MCF 10A (cell line): ENCODE measurements at regions of chr17 and their contacts with region 1.

Region 1: DNA sequence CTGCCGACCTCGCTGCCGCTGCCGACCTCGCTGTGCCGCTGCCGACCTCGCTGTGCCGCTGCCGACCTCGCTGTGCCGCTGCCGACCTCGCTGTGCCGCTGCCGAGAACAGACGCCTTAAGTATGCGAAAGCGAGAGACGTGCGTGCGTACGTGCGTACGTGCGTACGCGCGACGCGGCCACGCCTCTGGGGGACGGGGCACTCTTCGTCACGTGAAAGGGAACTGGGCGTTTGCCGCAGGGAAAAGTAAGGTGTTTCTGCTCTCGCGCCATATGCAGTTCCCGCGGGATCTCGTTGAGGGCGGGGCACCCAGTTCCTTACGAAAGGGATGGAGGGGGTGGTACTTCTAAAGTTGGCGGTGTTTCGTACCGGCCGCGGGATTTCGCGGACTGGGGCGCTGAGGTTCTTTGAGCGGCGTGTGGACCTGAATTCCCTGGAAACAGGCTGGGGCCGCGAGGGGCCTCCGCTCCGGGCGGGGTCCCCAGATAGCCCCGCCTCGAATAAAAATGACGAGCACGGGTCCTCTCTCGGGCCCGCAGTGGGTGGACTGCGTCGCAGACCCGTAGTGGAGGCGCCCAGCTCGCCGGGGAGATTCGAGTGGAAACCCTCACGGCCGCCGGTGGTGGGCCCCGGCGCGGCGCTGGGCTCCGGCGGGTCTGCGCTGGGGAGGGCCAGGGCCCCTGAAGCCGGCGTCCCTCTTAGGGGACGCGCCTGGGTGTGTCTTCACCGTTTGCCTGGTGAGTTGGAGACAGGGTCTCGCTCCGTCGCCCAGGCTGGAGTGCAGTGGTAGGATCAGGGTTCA is at the start of gene EIF4A3:
- DNase-seq: peak; percentile 99
- H3K4me3 Mint-ChIP-seq: peak within 1 kb of the TSS; percentile 84
- H3K27ac Mint-ChIP-seq: peak within 1 kb of the TSS; percentile 62
- H3K4me1 Mint-ChIP-seq: peaks cover 17% of the 10 kb centered on the region
- H3K27me3 Mint-ChIP-seq: no peaks in the 10 kb centered on the region
- CTCF ChIP-seq: no peak
- total RNA-seq, gene EIF4A3: 87.0 and 97.7 TPM in 2 replicates

Region 2: DNA sequence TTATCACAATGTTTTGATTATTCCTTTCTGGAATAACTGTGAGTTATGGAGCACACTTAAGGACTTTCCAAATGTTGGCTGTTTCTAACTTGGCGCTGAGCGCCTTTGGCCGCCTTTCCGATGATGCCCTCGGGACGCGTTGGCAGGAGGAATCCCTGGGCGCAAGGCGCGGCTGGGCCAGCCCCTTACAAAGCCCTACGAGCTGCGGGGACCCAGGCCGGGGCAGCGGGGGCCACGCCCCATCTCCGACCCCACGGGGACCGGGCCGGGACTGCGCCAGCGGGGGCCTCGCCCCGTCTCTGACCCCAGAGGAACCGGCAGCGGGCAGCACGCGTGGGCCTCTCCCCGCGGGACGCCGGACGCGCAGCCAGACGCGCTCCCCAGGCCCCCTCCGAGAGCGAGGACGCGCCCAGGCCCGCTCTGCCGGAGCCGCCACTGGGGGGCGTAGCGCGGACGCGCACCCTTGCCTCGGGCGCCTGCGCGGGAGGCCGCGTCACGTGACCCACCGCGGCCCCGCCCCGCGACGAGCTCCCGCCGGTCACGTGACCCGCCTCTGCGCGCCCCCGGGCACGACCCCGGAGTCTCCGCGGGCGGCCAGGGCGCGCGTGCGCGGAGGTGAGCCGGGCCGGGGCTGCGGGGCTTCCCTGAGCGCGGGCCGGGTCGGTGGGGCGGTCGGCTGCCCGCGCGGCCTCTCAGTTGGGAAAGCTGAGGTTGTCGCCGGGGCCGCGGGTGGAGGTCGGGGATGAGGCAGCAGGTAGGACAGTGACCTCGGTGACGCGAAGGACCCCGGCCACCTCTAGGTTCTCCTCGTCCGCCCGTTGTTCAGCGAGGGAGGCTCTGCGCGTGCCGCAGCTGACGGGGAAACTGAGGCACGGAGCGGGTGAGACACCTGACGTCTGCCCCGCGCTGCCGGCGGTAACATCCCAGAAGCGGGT is 46.0 kb before region 1 on chr17 and contains the start of gene GAA:
- CTCF ChIA-PET with region 1: interaction called, 14 read pairs
- POLR2A ChIA-PET with region 1: interaction called, 20 read pairs
- intact Hi-C with region 1: no loop called
- DNase-seq: peak; percentile 68
- H3K4me3 Mint-ChIP-seq: peak within 1 kb of the TSS; percentile 79
- H3K27ac Mint-ChIP-seq: peak within 1 kb of the TSS; percentile 67
- H3K4me1 Mint-ChIP-seq: peaks cover 18% of the 10 kb centered on the region
- H3K27me3 Mint-ChIP-seq: no peaks in the 10 kb centered on the region
- CTCF ChIP-seq: peak; percentile 69
- total RNA-seq, gene GAA: 26.0 and 31.3 TPM in 2 replicates

Region 3: DNA sequence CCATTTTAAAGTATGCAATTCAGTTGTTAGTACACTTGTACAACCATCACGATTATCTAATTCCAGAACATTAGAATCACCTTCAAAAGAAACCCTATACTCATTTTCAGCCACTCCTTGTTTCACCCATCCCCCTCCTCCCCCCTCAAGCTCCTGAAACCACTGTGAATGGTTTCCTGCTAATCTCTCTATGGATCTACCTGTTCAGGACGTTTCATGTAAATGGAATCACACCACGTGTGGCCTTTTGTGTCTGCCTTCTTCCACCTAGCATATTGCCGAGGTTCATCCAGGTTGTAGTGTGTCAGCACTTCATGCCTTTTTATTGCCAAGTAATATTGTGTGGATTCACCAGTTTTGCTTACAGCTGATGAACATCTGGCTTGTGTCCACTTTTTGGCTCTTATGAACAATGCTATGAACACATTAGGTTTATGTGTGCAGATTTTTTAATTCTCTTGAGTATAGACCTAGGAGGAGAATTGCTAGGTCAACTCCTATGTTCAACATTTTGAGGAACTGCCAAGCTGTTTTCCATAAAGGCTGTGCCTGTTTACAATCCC is 18.2 kb before region 1 on chr17:
- CTCF ChIA-PET with region 1: interaction called, 5 read pairs
- POLR2A ChIA-PET with region 1: interaction called, 13 read pairs
- intact Hi-C with region 1: no loop called
- DNase-seq: no peak
- H3K4me3 Mint-ChIP-seq: no peak overlapping the region
- H3K27ac Mint-ChIP-seq: no peak overlapping the region
- H3K4me1 Mint-ChIP-seq: peaks cover 4% of the 10 kb centered on the region
- H3K27me3 Mint-ChIP-seq: peaks cover 18% of the 10 kb centered on the region
- CTCF ChIP-seq: no peak

Region 4: GRCh38 chr17:80187515-80187941 is 40.3 kb after region 1 on chr17:
- CTCF ChIA-PET with region 1: interaction called, 3 read pairs
- POLR2A ChIA-PET with region 1: interaction called, 9 read pairs
- intact Hi-C with region 1: loop called (anchors 2 kb)
- DNase-seq: peak; percentile 84
- H3K4me3 Mint-ChIP-seq: peak overlapping the region; percentile 62
- H3K27ac Mint-ChIP-seq: peak overlapping the region; percentile 67
- H3K4me1 Mint-ChIP-seq: peaks cover 8% of the 10 kb centered on the region
- H3K27me3 Mint-ChIP-seq: peaks cover 4% of the 10 kb centered on the region
- CTCF ChIP-seq: no peak